ENCODE measurements at regions of chr17 and their contacts with region 1.

Region 1: GRCh38 chr17:49997791-49998703 is 3.0 kb upstream of the DLX3 start:
- DNase-seq: peak; percentile 92
- ATAC-seq: peak; percentile 86
- H3K4me3 Mint-ChIP-seq: no peak overlapping the region
- H3K27ac Mint-ChIP-seq: no peak overlapping the region
- H3K4me1 Mint-ChIP-seq: peaks cover 23% of the 10 kb centered on the region
- H3K27me3 Mint-ChIP-seq: peaks cover 56% of the 10 kb centered on the region

Region 2: DNA sequence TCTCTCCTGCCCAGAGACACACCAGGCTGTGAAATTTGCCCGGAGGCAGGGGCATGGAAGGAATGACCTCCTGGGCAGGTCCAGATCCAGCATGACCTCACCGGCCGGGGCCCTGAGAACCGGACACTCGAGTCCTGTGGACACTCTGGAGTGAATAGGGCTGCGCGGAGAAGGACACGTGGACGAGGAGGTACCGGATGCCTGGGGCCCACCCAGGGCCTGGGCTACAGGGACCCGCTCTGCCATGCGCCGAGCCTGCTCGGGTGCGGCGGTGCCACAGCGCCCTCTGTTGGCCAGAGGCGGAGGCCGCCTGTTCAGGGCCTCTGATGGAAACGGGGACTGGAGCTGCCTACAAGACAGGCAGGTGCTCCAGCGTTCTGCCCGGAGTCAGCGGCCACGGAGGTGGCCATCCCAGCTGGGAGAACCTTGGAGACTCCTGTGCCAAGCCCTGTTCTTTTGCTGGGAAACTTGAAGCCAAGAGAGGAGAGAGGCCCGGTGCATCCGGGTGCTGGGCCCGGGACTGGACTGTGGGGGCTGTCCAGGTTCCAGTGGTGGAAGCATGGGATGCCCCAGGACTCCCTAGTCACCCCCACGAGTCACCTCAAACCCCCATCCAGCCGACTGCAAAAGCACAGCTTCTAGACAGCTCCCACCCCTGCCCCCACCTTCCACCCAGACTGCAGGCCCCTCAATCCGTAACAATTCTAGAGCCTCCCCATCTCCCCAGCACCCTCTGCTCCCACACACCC is 441.6 kb before region 1 on chr17:
- CTCF ChIA-PET with region 1: interaction called, 25 read pairs
- POLR2A ChIA-PET with region 1: no interaction called
- intact Hi-C with region 1: no loop called
- DNase-seq: peak; percentile 92
- ATAC-seq: peak; percentile 96
- H3K4me3 Mint-ChIP-seq: no peak overlapping the region
- H3K27ac Mint-ChIP-seq: no peak overlapping the region
- H3K4me1 Mint-ChIP-seq: peaks cover 8% of the 10 kb centered on the region
- H3K27me3 Mint-ChIP-seq: peaks cover 3% of the 10 kb centered on the region

Region 3: DNA sequence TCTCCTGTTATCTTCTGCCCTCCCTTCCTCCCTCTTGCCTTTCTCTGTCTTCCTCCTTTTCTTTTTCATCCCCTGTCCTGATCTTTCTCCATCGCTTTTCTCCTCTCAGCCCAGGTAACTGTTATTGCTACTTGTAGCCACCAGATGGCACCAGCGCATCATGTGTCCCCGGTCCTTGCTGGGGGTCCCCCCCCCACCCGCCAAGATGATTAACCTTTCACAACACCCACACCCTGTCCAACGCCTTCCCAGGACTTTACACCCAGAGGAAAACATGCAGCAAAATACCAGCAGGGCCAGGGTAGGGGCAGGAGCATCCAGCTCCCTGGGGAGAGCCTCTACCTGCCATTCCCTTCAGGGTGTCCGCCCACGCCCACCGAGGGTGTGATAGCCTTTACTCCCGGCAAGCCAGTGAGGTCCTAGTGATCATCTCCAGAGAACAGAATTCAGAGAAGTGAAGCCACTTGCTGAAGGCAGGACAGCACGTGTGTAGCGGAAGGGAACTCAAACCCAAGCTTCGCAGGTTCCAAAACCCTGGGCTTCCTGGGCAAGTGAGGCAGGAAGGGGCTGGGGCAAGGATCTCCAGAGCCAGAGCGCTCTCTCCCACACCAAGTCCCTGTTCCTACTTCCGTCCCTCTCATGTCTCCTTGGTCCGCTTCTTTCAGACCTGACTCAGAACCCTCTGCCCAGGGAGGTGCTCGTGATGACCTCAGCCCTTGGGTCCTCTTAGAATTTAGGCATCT is 136.7 kb before region 1 on chr17:
- CTCF ChIA-PET with region 1: interaction called, 138 read pairs
- POLR2A ChIA-PET with region 1: no interaction called
- intact Hi-C with region 1: loop called (anchors 1 kb)
- DNase-seq: peak; percentile 73
- ATAC-seq: peak; percentile 70
- H3K4me3 Mint-ChIP-seq: no peak overlapping the region
- H3K27ac Mint-ChIP-seq: no peak overlapping the region
- H3K4me1 Mint-ChIP-seq: peaks cover 4% of the 10 kb centered on the region
- H3K27me3 Mint-ChIP-seq: peaks cover 7% of the 10 kb centered on the region

Region 4: GRCh38 chr17:49899191-49899485 is 98.9 kb before region 1 on chr17:
- CTCF ChIA-PET with region 1: interaction called, 15 read pairs
- POLR2A ChIA-PET with region 1: no interaction called
- intact Hi-C with region 1: no loop called
- DNase-seq: peak; percentile 15
- ATAC-seq: no peak
- H3K4me3 Mint-ChIP-seq: no peak overlapping the region
- H3K27ac Mint-ChIP-seq: no peak overlapping the region
- H3K4me1 Mint-ChIP-seq: no peaks in the 10 kb centered on the region
- H3K27me3 Mint-ChIP-seq: peaks cover 41% of the 10 kb centered on the region

Region 5: GRCh38 chr17:49952209-49952911 is 45.7 kb before region 1 on chr17:
- CTCF ChIA-PET with region 1: interaction called, 124 read pairs
- POLR2A ChIA-PET with region 1: interaction called, 3 read pairs
- intact Hi-C with region 1: loop called (anchors 1 kb)
- DNase-seq: peak; percentile 92
- ATAC-seq: peak; percentile 97
- H3K4me3 Mint-ChIP-seq: no peak overlapping the region
- H3K27ac Mint-ChIP-seq: no peak overlapping the region
- H3K4me1 Mint-ChIP-seq: no peaks in the 10 kb centered on the region
- H3K27me3 Mint-ChIP-seq: peaks cover 33% of the 10 kb centered on the region

Region 6: DNA sequence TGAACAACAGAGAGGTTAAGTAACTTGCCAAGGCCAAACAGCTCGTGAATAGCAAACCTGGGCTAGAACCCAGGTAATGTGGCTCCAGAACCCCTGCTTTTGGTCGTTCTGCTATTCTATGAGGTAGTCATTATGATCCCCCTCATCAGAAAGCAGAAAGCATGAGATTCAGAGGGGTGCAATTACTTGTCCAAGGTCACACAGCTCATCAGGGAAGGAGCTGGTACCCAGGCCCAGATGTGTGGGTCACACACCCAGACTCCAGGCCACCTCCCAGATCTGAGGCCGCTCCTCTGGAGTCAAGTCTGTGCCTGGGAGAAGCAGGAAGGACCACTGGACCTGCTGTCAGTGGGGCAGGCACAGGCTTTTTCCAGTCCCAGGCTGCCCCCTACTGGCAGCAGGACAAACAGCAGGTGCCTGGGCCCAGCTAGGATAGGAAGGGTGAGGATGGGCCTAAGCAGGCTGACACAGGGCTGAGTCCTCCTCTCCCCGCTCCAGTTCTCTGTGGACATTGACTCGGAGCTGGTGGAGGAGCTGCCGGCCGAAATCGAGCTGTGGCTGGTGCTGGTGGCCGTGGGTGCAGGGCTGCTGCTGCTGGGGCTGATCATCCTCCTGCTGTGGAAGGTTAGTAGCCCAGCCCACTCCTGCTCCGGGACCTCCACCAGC is 89.3 kb after region 1 on chr17:
- CTCF ChIA-PET with region 1: interaction called, 43 read pairs
- POLR2A ChIA-PET with region 1: no interaction called
- intact Hi-C with region 1: no loop called
- DNase-seq: peak; percentile 87
- ATAC-seq: peak; percentile 88
- H3K4me3 Mint-ChIP-seq: no peak overlapping the region
- H3K27ac Mint-ChIP-seq: no peak overlapping the region
- H3K4me1 Mint-ChIP-seq: no peaks in the 10 kb centered on the region
- H3K27me3 Mint-ChIP-seq: no peaks in the 10 kb centered on the region

Measured in activated CD4-positive, alpha-beta T cell treated with anti-CD3 and anti-CD28 coated beads for 36 hours (primary cell).